ENCODE measurements at regions of chr1 and their contacts with region 1.

Region 1: GRCh38 chr1:105027838-105028471 is 1278.3 kb downstream of the AMY1C start:
- DNase-seq: no peak
- ATAC-seq: peak; percentile 79
- H3K4me3 ChIP-seq: no peak overlapping the region
- H3K27ac ChIP-seq: no peak overlapping the region
- H3K4me1 ChIP-seq: no peaks in the 10 kb centered on the region
- H3K27me3 ChIP-seq: no peaks in the 10 kb centered on the region
- CTCF ChIP-seq: peak; percentile 34 to 48 (median 42); a peak in 4 of 6 replicates
- EP300 ChIP-seq: no peak
- POLR2A ChIP-seq: no peak
- RAD21 ChIP-seq: peak; percentile 80

Region 2: DNA sequence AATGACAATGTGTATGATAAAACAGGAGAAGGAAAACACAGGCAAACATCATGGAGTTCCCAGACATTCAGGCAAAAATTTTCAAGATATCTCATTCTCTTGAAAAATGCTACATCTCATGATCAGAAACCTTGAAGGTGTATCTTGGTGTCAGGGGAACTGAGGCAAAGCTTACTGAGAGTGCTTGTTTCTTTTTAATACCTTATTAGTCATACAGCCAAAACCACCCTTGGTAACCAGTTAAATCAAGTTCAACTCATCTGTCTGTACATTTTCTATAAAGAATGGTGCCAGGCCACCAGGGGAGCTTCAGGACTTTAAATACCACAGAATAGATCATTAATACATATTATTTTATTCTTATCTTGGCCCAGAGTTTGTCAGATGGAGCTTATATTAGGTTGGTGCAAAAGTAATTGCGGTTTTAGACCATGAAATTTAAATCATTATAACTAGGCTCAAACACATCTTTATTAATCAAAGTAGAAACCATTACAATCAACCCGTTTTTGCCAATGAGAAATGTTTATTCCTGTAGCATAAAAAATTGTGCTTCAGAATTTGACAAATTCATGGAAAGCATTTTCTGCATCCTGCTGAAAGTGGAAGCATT is 242.3 kb before region 1 on chr1:
- CTCF ChIA-PET with region 1: interaction called, 49 read pairs
- POLR2A ChIA-PET with region 1: no interaction called
- RAD21 ChIA-PET with region 1: interaction called, 28 read pairs
- SMC1A ChIA-PET with region 1: interaction called, 38 read pairs
- in situ Hi-C with region 1: no loop called
- intact Hi-C with region 1: loop called (anchors 1 kb)
- DNase-seq: no peak
- ATAC-seq: no peak
- H3K4me3 ChIP-seq: no peak overlapping the region
- H3K27ac ChIP-seq: no peak overlapping the region
- H3K4me1 ChIP-seq: no peaks in the 10 kb centered on the region
- H3K27me3 ChIP-seq: no peaks in the 10 kb centered on the region
- CTCF ChIP-seq: no peak
- EP300 ChIP-seq: no peak
- POLR2A ChIP-seq: no peak
- RAD21 ChIP-seq: no peak

Region 3: GRCh38 chr1:105100102-105100501 is 72.1 kb after region 1 on chr1:
- CTCF ChIA-PET with region 1: no interaction called
- POLR2A ChIA-PET with region 1: no interaction called
- RAD21 ChIA-PET with region 1: no interaction called
- SMC1A ChIA-PET with region 1: no interaction called
- in situ Hi-C with region 1: no loop called
- intact Hi-C with region 1: no loop called
- DNase-seq: no peak
- ATAC-seq: no peak
- H3K4me3 ChIP-seq: no peak overlapping the region
- H3K27ac ChIP-seq: no peak overlapping the region
- H3K4me1 ChIP-seq: no peaks in the 10 kb centered on the region
- H3K27me3 ChIP-seq: no peaks in the 10 kb centered on the region
- CTCF ChIP-seq: no peak
- EP300 ChIP-seq: no peak
- POLR2A ChIP-seq: no peak
- RAD21 ChIP-seq: no peak

Region 4: DNA sequence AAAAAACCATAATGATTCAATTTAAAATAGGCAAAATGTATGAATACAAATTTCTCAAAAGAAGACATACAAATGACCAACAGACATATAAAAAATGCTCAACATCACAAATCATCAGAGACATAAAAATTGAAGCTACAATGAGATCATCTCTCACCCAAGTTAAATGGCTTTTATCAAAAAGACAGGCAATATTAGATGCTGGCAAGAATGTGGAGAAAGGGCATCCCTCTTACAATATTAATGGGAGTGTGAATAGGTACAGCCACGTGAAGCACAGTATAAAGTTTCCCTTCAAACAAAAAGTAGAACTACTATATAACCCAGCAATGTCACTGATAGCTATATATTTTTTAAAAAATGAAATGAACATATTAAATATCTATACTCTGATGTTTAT is 203.4 kb after region 1 on chr1:
- CTCF ChIA-PET with region 1: no interaction called
- POLR2A ChIA-PET with region 1: no interaction called
- RAD21 ChIA-PET with region 1: no interaction called
- SMC1A ChIA-PET with region 1: no interaction called
- in situ Hi-C with region 1: no loop called
- intact Hi-C with region 1: no loop called
- DNase-seq: no peak
- ATAC-seq: no peak
- H3K4me3 ChIP-seq: no peak overlapping the region
- H3K27ac ChIP-seq: no peak overlapping the region
- H3K4me1 ChIP-seq: no peaks in the 10 kb centered on the region
- H3K27me3 ChIP-seq: no peaks in the 10 kb centered on the region
- CTCF ChIP-seq: no peak
- EP300 ChIP-seq: no peak
- POLR2A ChIP-seq: no peak
- RAD21 ChIP-seq: no peak

Measured in GM12878 (cell line).